Brain microvascular endothelial cell (primary cell): ENCODE measurements at regions of chr1 and their contacts with region 1.

Region 1: DNA sequence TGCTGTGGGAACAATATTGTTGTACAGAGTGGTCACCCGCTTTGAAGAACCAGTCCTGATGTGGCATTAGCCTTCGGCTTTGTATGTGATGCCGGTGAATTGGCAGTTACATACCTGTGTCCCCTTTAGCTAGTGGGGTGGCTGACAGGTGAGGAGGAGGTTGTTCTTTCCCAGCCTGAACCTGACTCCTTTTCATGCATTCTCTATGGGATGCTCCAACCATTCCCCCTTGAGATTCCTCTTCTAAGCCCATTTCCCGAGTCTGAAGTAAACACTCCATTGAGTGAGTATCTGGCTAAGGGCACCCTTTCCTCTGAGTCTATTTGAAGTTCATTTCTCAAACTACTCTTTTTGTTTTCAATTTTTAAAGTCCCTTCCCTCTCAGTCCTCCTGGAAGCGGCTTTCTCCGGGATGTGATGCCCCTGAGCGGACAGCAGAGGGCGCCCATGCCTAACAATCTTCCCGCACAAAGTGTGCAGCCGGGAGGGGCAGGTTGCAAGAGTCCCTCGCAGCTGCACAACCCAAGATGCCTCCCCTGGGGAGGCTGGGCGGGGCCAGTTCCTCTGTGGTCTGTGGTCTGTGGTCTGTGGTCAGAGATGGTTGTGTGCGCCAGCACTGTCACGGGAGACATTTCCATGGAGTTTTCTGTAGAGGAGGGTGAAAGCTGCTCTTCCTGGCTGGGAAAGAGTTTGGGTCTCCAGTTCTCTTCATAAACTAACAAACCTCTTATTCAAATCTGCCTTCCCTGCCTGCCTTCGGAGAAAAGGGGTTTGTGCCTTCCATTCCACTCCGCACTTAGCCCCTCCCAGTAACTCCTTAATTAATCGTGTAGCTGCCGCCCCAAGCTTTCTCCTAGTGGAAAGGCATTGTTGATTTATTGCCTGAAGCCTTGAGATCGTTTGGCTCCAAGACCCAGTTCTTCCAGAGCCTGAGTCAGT is 36.4 kb upstream of the LMX1A start:
- DNase-seq: peak; percentile 93
- H3K4me3 ChIP-seq: no peak overlapping the region
- H3K27ac ChIP-seq: no peak overlapping the region
- H3K27me3 ChIP-seq: peaks cover 52% of the 10 kb centered on the region
- CTCF ChIP-seq: peak; percentile 96

Region 2: DNA sequence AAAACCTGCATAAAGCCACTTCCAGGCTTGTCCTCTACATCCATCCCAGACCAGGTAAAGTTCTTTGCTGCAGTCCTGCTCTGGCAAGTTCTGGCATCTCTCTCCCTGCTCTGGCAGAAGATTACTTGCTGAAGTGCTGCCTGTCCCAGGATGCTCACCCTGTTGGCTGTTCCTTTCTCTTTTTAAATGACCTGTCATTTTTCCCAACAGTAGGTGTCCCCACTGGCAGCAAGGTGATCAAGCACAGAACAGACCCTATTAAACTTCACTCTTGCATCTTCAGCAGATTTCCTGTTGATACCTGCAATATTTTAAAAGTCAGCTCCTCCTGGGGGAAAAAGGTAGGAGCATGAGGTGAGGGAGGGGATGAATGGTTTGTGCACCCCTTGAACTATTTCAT is 501.3 kb before region 1 on chr1:
- in situ Hi-C with region 1: no loop called
- DNase-seq: no peak
- H3K4me3 ChIP-seq: no peak overlapping the region
- H3K27ac ChIP-seq: no peak overlapping the region
- H3K27me3 ChIP-seq: no peaks in the 10 kb centered on the region
- CTCF ChIP-seq: no peak

Region 3: DNA sequence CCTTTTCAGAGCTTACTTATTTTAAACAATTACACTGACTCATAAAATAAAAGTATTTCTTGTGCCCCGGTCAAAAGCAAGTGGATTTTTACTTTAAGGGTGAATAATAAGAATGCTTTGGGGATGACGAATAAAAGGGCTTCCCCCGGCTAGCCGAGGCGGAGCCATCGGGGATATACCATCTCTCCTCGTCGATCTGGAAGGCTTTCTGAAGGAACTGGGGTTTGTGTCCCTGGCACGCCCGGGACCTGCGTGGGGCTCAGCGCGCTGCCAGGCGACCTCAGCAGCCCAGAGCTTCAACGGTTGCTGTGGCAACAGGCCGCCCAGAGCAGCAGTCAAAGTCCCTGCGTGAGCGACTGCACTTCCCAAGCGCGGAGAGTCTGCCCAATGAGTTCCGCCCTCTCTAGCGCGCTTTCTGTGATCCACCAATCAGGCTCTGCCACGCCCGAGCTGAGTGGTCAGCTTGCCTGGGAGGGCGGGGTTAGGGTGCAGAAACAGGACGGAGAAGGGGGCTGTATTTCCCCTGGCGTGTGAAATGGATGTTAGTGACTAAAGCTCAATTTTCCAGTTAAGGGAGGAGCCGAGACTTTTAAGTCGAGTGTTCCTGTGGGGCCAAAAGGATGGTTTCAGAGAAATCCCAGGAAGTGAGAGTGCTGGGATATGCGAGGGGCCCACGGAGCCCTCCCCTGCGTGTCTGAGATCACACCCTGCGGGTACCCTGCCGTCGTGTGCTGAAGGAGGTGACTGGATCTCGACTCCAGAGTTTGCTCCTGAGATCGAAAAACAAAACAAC is 205.2 kb after region 1 on chr1:
- in situ Hi-C with region 1: loop called (anchors 25 kb)
- DNase-seq: peak; percentile 97
- H3K4me3 ChIP-seq: peak overlapping the region; percentile 57
- H3K27ac ChIP-seq: peak overlapping the region; percentile 71
- H3K27me3 ChIP-seq: peaks cover 13% of the 10 kb centered on the region
- CTCF ChIP-seq: no peak

Region 4: DNA sequence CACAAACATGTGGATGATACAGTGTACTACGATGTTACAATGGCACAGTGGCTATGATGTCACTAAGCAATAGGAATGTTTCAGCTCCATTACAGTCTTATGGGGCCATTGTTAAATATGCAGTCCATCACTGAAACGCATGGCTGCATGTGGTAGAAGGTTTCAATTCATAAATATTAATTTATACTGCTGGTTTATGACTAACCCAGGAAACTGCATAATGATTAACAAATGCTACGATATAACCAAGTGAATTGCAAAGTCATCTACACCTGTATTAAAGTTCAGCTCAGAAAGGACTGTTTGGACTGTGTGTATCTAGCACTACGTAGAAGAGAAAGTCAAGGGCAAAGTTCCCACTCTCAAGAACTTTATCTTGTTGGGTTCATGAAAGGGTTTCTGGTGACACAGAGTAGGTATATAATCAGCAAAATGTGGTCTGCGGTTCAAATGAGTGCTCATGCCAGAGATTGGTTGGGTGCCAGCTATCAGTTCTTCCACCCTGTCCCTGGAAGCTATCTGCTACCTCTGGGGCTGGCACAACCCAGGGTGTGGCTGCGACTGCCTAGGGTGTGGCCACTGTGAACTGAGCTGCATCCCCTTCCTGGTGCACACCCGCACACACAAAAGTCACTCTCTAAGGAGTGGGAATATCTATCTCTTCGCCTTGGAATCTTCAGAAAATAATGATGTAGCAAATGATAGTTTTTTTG is 252.9 kb after region 1 on chr1:
- in situ Hi-C with region 1: no loop called
- DNase-seq: no peak
- H3K4me3 ChIP-seq: no peak overlapping the region
- H3K27ac ChIP-seq: no peak overlapping the region
- H3K27me3 ChIP-seq: no peaks in the 10 kb centered on the region
- CTCF ChIP-seq: no peak

Region 5: GRCh38 chr1:166007176-166007575 is 614.3 kb after region 1 on chr1:
- in situ Hi-C with region 1: no loop called
- DNase-seq: no peak
- H3K4me3 ChIP-seq: no peak overlapping the region
- H3K27ac ChIP-seq: no peak overlapping the region
- H3K27me3 ChIP-seq: no peaks in the 10 kb centered on the region
- CTCF ChIP-seq: no peak